HEK293 (cell line): ENCODE measurements at regions of chr6 and their contacts with region 1.

Region 1: GRCh38 chr6:52284460-52285176 is at the start of gene MCM3:
- H3K4me3 ChIP-seq: peak within 1 kb of the TSS; percentile 76
- H3K27ac ChIP-seq: peak within 1 kb of the TSS; percentile 96
- H3K4me1 ChIP-seq: peaks cover 6% of the 10 kb centered on the region; the same call in 1 of the 2 replicates
- CTCF ChIP-seq: no peak

Region 2: GRCh38 chr6:52271852-52272460 is 12.7 kb before region 1 on chr6:
- CTCF ChIA-PET with region 1: interaction called, 7 read pairs
- POLR2A ChIA-PET with region 1: interaction called, 14 read pairs
- H3K4me3 ChIP-seq: no peak overlapping the region
- H3K27ac ChIP-seq: peak overlapping the region; percentile 40; the same call in 1 of the 2 replicates
- H3K4me1 ChIP-seq: no peaks in the 10 kb centered on the region
- CTCF ChIP-seq: no peak

Region 3: DNA sequence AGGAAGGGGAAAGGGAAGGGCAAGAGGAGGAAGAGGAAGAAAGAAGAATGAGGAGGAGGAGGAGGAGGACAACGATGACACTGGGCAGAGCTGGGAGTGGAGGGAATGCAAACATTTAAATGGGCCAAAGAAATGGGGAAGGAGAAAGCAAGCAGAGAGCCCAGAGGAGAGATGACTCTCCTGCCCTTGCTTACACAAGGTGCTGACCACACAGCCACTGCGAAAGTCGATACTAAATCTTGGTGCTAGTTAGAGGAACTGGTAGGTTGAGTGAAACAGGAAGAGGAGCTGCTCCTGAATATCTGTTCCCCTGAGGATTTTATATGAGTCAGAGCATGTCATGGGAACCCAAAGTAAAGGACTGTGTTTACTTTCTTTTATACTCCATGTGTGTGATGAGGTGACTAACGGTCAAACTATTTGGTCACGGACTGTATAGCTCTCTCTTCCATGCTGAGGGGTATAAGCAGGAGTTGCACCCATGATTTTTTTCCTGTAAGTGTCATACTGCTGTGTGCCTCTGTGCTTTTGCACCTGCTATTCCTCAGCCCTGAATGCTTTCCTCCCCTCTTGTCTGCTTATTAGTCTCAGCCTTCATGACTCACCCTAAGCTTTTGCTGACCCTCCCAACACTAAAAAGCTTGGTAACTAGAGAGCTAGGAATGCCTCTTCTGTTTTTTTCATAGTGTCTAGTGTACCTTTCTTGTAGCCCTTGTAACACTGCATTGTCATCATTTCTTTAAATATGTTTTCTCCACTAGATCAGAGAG is 67.8 kb after region 1 on chr6:
- CTCF ChIA-PET with region 1: interaction called, 12 read pairs
- POLR2A ChIA-PET with region 1: interaction called, 11 read pairs
- H3K4me3 ChIP-seq: no peak overlapping the region
- H3K27ac ChIP-seq: no peak overlapping the region
- H3K4me1 ChIP-seq: peaks cover 9% of the 10 kb centered on the region
- CTCF ChIP-seq: no peak

Region 4: DNA sequence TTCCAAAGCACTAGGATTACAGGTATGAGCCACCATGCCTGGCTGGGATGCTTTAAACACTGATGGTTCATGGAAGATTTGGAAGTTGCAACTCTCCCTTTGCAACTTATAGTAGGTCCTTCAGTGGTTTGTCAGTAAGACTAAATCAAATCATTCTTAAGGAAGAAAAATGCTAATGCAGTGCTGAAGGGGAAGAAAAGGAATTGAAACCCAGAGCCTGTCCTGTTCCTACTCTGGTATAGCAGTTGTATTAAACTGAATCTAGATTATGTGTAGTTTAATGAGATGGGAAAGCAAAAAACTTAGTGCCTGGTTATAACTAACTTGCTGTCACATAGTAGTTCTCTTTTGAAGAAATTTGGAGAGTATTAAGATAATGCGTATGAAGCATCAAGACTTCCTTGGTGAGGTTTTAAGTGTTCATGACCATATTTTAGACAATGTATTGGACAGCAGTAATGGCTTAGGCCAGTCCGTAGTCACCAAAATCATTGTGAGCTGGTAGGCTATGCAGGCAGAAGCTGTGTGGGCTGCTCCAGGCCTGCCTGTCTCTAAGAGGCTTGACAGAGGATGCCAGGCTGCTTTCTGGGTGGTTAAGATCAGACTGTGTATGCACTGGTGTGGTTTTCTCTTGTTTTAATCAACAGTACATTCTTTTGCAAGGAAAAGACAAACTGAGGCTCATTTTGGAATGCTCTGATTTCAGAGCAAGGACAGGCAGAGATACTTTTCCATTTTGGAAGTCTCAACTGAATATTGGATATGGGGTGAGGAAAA is 91.3 kb after region 1 on chr6:
- CTCF ChIA-PET with region 1: interaction called, 10 read pairs
- POLR2A ChIA-PET with region 1: interaction called, 5 read pairs
- H3K4me3 ChIP-seq: no peak overlapping the region
- H3K27ac ChIP-seq: no peak overlapping the region
- H3K4me1 ChIP-seq: no peaks in the 10 kb centered on the region
- CTCF ChIP-seq: no peak

Region 5: DNA sequence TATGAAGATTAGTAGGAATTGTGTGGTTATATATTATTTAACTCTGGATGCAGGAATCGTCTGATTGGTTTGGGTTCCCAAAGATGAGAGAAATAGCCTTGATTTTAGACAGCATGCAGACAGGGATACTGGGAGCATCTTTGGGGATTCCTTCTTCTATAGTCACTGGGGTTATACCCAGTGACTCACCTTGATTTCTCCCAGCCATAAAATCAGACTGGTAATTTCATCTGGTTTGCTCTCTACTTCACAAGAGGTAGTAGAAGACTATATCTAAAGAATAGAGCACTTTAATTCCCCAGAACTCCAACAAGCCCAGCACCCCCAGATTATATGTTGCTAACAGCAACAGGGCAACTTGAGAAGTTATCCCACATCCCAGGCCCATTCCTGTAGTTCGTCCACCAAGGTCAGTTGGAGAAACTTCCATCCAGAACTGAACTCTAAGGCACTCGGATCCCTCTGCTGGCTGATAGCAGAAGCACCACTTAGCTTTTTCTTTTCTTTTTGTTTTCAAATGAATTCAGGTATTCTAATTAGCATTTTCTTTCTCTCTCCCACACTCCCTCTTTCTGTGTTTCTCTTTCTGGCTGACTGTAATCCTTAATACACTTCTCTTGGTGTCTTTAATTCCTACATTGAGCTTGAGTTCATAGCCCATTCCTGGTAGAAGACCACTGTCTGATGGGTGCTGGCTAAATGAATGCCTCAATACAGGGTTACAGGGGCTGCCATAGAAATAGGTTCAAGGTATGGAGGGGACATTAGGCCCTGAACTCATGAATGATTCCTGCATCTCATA is 115.1 kb after region 1 on chr6:
- CTCF ChIA-PET with region 1: interaction called, 202 read pairs
- POLR2A ChIA-PET with region 1: interaction called, 13 read pairs
- H3K4me3 ChIP-seq: no peak overlapping the region
- H3K27ac ChIP-seq: no peak overlapping the region
- H3K4me1 ChIP-seq: no peaks in the 10 kb centered on the region
- CTCF ChIP-seq: peak; percentile 68

Region 6: GRCh38 chr6:52419809-52420670 is 135.4 kb after region 1 on chr6 and contains the start of gene EFHC1:
- CTCF ChIA-PET with region 1: interaction called, 14 read pairs
- POLR2A ChIA-PET with region 1: interaction called, 10 read pairs
- H3K4me3 ChIP-seq: peak within 1 kb of the TSS; percentile 66
- H3K27ac ChIP-seq: peak within 1 kb of the TSS; percentile 56; the same call in 1 of the 2 replicates
- H3K4me1 ChIP-seq: 0 out of 2 replicates have a peak, but pooled peaks cover 3% of the 10 kb centered on the region
- CTCF ChIP-seq: peak; percentile 31; the same call in 1 of the 2 replicates

Region 7: GRCh38 chr6:52491203-52492069 is 206.8 kb after region 1 on chr6:
- CTCF ChIA-PET with region 1: no interaction called
- POLR2A ChIA-PET with region 1: no interaction called
- H3K4me3 ChIP-seq: no peak overlapping the region
- H3K27ac ChIP-seq: no peak overlapping the region
- H3K4me1 ChIP-seq: peaks cover 4% of the 10 kb centered on the region; the same call in 1 of the 2 replicates
- CTCF ChIP-seq: no peak